Activated B cell treated with CpG ODN at 0.5 μM for 24 hours (primary cell): ENCODE measurements at regions of chr20 and their contacts with region 1.

Region 1: DNA sequence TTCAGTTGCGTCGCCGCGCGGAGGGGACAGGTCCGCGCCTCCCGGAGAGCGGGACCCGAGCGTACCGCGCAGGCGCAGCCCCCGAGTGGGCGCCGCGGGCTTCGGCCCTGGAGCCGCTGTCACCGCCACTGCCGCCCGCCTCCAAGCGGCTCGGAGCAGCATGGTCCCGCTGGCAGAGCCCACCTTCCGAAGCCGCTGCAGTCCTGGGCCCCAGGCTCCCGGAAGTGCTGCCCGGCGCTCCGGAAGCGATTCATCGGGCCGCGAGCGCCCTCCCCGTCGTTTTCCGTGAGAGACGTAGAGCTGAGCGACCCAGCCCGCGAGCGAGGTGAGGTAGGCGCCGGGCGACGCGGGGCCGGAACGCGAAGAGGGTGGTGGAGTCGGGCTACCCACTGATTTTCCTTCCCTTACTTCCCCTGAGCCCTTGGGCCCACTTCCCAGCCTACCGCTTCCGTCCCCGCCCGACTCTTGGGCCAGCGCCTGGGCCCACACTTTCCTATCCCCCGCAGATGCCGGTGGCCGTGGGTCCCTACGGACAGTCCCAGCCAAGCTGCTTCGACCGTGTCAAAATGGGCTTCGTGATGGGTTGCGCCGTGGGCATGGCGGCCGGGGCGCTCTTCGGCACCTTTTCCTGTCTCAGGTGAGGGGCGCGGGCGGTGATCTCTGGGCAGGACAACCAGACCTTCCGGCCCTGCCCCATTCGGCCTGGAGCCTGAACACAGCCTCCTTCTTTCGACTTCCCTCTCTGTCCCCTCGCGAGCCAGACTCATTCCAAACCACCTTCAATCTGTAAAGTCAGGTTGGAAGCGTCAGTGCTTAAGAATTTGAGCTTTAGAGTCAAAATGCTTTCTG is at the starts of genes NFS1 and ROMO1:
- DNase-seq: peak; percentile 85
- ATAC-seq: peak; percentile 90
- H3K4me3 Mint-ChIP-seq: peak within 1 kb of the TSS; percentile 97
- H3K27ac Mint-ChIP-seq: peak within 1 kb of the TSS; percentile 91
- H3K4me1 Mint-ChIP-seq: peaks cover 27% of the 10 kb centered on the region
- H3K27me3 Mint-ChIP-seq: no peaks in the 10 kb centered on the region
- CTCF ChIP-seq: no peak
- total RNA-seq, gene NFS1: 27.1 and 30.6 TPM in 2 replicates
- total RNA-seq, gene ROMO1: 96.8 and 131 TPM in 2 replicates

Region 2: GRCh38 chr20:35063168-35063567 is 636.2 kb before region 1 on chr20:
- CTCF ChIA-PET with region 1: no interaction called
- POLR2A ChIA-PET with region 1: no interaction called
- intact Hi-C with region 1: no loop called
- DNase-seq: no peak
- ATAC-seq: no peak
- H3K4me3 Mint-ChIP-seq: no peak overlapping the region
- H3K27ac Mint-ChIP-seq: no peak overlapping the region
- H3K4me1 Mint-ChIP-seq: peaks cover 39% of the 10 kb centered on the region
- H3K27me3 Mint-ChIP-seq: no peaks in the 10 kb centered on the region
- CTCF ChIP-seq: no peak

Region 3: GRCh38 chr20:35478804-35479472 is 220.4 kb before region 1 on chr20:
- CTCF ChIA-PET with region 1: interaction called, 3 read pairs
- POLR2A ChIA-PET with region 1: interaction called, 6 read pairs
- intact Hi-C with region 1: loop called (anchors 1 kb)
- DNase-seq: no peak
- ATAC-seq: peak; percentile 81
- H3K4me3 Mint-ChIP-seq: no peak overlapping the region
- H3K27ac Mint-ChIP-seq: peak overlapping the region; percentile 51
- H3K4me1 Mint-ChIP-seq: peaks cover 8% of the 10 kb centered on the region
- H3K27me3 Mint-ChIP-seq: no peaks in the 10 kb centered on the region
- CTCF ChIP-seq: no peak

Region 4: DNA sequence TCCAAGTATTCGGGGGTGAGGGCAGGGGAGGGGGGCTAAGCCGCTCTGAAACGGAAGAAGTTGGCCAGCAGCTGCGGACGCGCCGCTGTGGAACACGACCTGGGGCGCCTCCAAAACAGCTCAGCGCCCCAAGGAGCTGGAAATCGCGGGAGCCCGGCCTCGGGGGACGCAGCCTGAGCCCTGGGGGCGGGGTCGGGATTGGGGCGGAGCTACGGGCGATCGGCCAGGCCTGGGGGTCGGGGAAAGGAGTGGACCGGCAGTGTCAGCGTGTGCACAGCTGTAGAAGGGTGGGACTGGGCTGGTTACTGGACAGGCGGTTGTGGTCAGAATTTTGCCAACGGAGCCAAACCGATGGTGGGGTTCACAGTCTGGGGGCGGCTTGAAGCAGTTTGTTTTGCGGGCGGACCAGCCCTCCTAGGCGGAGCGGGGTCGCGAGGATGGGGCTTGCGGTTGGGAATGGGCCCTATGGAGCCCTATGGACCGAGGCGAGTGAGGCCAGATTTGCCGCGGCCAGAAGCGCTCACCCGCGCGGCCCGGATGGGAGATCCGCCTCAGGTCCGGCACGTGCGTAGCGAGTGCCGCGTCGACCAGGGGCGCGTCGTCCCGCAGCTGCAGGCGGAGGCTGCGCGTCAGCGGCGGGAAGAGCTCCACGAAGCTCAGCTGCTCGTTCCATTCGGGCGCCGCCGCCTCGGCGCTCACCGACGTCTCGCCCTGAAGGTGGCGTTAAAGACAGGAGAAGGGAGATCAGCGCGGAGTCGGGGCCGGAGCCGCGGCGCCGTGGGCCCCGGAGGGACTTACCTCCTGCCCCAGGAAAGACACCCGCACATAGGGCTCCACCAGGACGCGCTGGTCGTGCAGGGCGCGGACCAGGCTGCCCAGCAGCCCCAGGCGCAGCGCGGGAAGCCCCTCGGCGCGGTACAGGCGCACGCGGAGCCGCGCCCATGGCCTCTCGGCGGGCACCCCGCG is 98.1 kb before region 1 on chr20:
- CTCF ChIA-PET with region 1: interaction called, 3 read pairs
- POLR2A ChIA-PET with region 1: interaction called, 3 read pairs
- intact Hi-C with region 1: loop called (anchors 1 kb)
- DNase-seq: peak; percentile 58
- ATAC-seq: peak; percentile 78
- H3K4me3 Mint-ChIP-seq: peak overlapping the region; percentile 81
- H3K27ac Mint-ChIP-seq: no peak overlapping the region
- H3K4me1 Mint-ChIP-seq: peaks cover 13% of the 10 kb centered on the region
- H3K27me3 Mint-ChIP-seq: peaks cover 29% of the 10 kb centered on the region
- CTCF ChIP-seq: no peak

Region 5: GRCh38 chr20:35718972-35719635 is 19.8 kb after region 1 on chr20:
- CTCF ChIA-PET with region 1: no interaction called
- POLR2A ChIA-PET with region 1: interaction called, 9 read pairs
- intact Hi-C with region 1: loop called (anchors 2 kb)
- DNase-seq: no peak
- ATAC-seq: no peak
- H3K4me3 Mint-ChIP-seq: no peak overlapping the region
- H3K27ac Mint-ChIP-seq: no peak overlapping the region
- H3K4me1 Mint-ChIP-seq: peaks cover 9% of the 10 kb centered on the region
- H3K27me3 Mint-ChIP-seq: no peaks in the 10 kb centered on the region
- CTCF ChIP-seq: no peak

Region 6: GRCh38 chr20:35771689-35772562 is 72.6 kb after region 1 on chr20 and contains the start of gene PHF20:
- CTCF ChIA-PET with region 1: no interaction called
- POLR2A ChIA-PET with region 1: interaction called, 12 read pairs
- intact Hi-C with region 1: loop called (anchors 1 kb)
- DNase-seq: peak; percentile 98
- ATAC-seq: peak; percentile 85
- H3K4me3 Mint-ChIP-seq: peak within 1 kb of the TSS; percentile 86
- H3K27ac Mint-ChIP-seq: peak within 1 kb of the TSS; percentile 95
- H3K4me1 Mint-ChIP-seq: peaks cover 79% of the 10 kb centered on the region
- H3K27me3 Mint-ChIP-seq: no peaks in the 10 kb centered on the region
- CTCF ChIP-seq: no peak
- total RNA-seq, gene PHF20: 72.3 and 86.0 TPM in 2 replicates

Region 7: DNA sequence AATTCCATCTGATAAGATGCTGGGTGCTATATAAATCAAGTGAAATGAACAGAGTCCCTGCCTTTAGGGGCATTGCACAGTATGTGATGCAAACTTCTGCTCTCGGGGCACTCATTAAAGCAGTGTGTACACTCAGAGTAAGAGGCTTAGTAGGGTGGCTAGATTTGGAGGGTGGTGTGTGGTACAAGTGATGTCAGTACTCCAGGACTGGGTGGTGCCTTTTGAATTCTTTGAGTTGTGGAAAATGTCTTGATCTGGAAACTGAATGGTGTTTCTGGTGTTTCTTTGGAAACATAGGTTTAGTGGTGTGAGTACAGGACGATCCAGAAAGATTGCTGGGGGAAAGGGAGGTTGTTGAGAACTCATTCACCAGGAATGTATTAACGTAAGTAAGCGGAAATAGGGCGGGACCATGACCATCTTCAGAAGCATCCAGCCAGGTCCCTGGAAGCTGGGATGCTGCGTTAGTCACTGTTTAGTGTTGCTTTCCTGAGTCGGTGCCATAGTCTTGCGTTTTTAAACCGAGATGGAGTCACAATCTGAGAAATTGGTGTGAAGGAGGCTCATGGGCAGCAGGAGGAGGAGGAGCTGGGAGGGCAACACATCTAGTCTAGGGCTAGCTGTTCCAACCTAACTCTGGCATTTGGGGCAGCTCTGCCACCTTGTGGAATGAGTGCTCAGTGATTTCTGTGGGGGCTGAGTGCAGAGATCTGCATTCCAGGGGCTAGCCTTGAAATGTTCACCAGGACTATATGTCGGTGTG is 184.6 kb after region 1 on chr20:
- CTCF ChIA-PET with region 1: no interaction called
- POLR2A ChIA-PET with region 1: no interaction called
- intact Hi-C with region 1: loop called (anchors 10 kb)
- DNase-seq: peak; percentile 28
- ATAC-seq: peak; percentile 85
- H3K4me3 Mint-ChIP-seq: no peak overlapping the region
- H3K27ac Mint-ChIP-seq: no peak overlapping the region
- H3K4me1 Mint-ChIP-seq: peaks cover 2% of the 10 kb centered on the region
- H3K27me3 Mint-ChIP-seq: no peaks in the 10 kb centered on the region
- CTCF ChIP-seq: no peak